Gastrocnemius medialis (tissue), 4 donors: ENCODE measurements at regions of chr19 and their contacts with region 1.

Region 1: GRCh38 chr19:4676955-4677731 is 7.0 kb upstream of the MYDGF start:
- DNase-seq: peak in 1 of 2 donors; percentile 80
- ATAC-seq: peak; percentile 76 to 81
- H3K4me3 ChIP-seq: no peak overlapping the region
- H3K27ac ChIP-seq: peak overlapping the region; percentile 81 to 90 (median 87)
- H3K4me1 ChIP-seq: peaks cover 8 to 14% of the 10 kb centered on the region in 2 donors
- H3K27me3 ChIP-seq: no peaks in the 10 kb centered on the region
- CTCF ChIP-seq: peak; percentile 60 to 92 (median 73)
- POLR2A ChIP-seq: peak in 1 of 2 donors; percentile 21

Region 2: GRCh38 chr19:4633140-4633967 is 43.8 kb before region 1 on chr19:
- in situ Hi-C with region 1: no loop called
- intact Hi-C with region 1: no loop called
- DNase-seq: peak in 1 of 2 donors; percentile 56
- ATAC-seq: peak; percentile 48 to 70
- H3K4me3 ChIP-seq: no peak overlapping the region
- H3K27ac ChIP-seq: peak overlapping the region in 1 of 4 donors; percentile 27
- H3K4me1 ChIP-seq: peaks cover 14% of the 10 kb centered on the region in 2 donors
- H3K27me3 ChIP-seq: peaks cover 0 to 2% (median 0%) of the 10 kb centered on the region in 3 donors
- CTCF ChIP-seq: peak; percentile 41 to 79 (median 70)
- POLR2A ChIP-seq: no peak

Region 3: DNA sequence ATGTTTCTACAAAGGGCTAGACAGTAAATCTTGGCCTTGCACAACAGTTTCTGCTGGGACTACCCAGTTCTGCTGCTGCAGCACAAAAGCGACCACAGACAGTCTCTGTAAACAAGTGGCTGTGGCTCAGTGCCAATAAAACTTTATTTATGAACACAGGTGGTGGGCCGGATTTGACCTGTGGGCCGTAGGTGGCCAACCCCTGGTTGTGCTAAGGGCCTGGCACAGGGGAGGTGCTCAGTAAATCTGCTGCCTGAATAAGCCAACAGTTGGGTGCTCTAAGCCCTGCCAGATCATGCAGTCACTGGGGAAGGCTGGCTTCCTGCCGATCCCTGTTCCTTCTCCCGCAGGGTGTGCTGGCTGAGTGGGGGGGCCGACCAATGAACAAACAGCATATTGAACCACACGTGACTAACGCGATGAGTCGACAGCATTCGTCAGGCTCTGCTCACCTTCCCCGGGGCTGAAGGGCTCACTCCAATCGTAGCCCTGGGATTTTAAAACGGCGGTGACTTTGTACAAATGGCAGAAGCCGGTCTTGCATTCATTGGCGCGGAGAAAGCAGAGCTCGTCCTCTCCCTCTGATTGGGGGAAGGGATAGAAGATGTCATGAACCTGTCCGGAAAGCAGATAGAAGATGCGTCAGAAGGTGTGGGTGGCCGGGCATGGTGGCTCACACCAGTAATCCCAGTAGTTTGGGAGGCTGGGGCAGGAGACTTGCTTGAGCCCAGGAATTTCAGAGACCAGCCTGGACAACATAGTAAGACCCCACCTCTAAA is 17.3 kb after region 1 on chr19:
- in situ Hi-C with region 1: no loop called
- intact Hi-C with region 1: loop called (anchors 2 kb)
- DNase-seq: peak; percentile 96 to 100
- ATAC-seq: peak; percentile 70 to 71
- H3K4me3 ChIP-seq: peak overlapping the region in 3 of 4 donors; percentile 21 to 35 (median 35)
- H3K27ac ChIP-seq: peak overlapping the region; percentile 95 to 97 (median 96)
- H3K4me1 ChIP-seq: peaks cover 53 to 57% of the 10 kb centered on the region in 2 donors
- H3K27me3 ChIP-seq: no peaks in the 10 kb centered on the region
- CTCF ChIP-seq: no peak
- POLR2A ChIP-seq: peak; percentile 77 to 87